ENCODE measurements at regions of chr2 and their contacts with region 1.

Region 1: DNA sequence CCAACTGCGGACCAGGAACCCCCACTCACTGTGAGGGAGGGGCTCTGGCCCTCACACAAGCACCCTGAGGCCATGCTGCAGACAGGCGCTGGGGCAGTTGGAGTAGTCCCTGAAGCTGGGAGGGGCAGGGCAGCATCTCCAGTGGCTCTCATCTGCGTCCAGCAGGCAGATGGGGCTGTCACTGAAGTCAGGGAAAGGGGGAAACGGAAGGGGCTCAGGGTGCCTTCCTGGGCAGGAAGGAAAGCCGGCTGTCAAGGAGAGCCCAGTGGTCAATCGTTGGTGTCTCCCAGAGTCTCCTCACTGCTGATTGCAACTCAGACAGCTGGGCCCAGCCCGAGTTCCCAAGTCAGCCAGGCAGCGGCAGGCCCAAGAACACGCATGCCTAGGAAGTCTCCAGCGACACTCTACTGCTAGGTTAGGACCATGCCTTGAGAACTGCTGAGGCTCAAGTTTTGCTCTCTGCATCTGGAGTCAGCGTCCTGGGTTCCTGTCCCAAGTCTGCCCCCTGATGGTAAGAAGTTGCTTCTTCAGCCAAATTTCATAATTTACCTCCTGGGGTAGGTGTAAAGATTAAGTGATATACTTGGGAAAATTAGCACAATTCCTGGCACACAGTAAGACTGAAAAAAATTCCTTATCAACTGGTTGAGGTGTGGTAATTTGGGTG is 27.5 kb upstream of the NMUR1 start:
- DNase-seq: no peak
- H3K4me3 ChIP-seq: no peak overlapping the region
- H3K27me3 ChIP-seq: 0 out of 2 replicates have a peak, but pooled peaks cover 1% of the 10 kb centered on the region
- CTCF ChIP-seq: peak; percentile 82

Region 2: GRCh38 chr2:231482806-231483391 is 74.8 kb before region 1 on chr2:
- CTCF ChIA-PET with region 1: interaction called, 52 read pairs
- POLR2A ChIA-PET with region 1: no interaction called
- DNase-seq: no peak
- H3K4me3 ChIP-seq: peak overlapping the region; percentile 10
- H3K27me3 ChIP-seq: no peaks in the 10 kb centered on the region
- CTCF ChIP-seq: peak; percentile 95

Region 3: DNA sequence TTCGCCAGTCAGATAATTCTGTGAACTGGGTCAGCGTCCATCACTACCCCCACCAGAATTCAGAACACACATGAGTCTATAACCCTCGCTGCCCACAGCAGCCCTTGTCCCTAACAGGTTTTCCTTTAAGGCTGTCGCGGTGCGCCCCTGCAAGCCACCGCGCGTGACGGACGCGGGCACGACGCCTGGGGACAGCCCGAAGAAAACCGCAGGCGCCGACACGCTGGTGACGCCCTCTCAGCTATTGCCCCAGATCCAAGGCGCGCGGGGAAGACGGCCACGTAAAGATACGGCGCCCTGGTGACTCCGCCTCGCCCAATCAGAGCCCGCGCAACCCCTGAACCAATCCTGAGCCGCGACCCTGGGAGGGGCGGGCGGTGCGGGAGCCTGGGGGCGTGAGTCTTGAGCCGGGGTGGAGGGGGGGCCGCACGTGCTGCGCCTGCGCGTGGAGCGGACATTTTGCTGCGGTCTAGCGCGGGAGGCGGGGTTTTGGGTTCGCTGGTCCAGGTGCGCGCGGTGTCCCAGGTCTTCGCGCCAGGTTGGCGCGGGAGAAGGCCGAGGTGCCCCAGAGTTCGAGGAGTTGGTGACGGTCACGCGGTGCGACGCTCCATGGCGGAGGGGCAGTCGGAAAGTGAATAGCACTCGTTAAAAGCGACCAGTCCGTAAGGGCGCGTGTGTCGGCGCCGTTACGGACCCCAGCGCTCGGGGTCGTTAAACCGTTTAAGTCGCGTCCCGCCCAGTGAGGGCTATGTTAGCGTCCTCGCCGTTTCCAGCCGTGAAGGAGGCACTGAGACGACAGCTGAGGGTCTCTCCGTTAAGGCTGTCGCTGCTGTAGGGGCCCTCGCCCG is 43.4 kb before region 1 on chr2:
- CTCF ChIA-PET with region 1: interaction called, 23 read pairs
- POLR2A ChIA-PET with region 1: no interaction called
- DNase-seq: peak; percentile 74
- H3K4me3 ChIP-seq: peak overlapping the region; percentile 53
- H3K27me3 ChIP-seq: peaks cover 2% of the 10 kb centered on the region; the same call in 1 of the 2 replicates
- CTCF ChIP-seq: no peak

Region 4: DNA sequence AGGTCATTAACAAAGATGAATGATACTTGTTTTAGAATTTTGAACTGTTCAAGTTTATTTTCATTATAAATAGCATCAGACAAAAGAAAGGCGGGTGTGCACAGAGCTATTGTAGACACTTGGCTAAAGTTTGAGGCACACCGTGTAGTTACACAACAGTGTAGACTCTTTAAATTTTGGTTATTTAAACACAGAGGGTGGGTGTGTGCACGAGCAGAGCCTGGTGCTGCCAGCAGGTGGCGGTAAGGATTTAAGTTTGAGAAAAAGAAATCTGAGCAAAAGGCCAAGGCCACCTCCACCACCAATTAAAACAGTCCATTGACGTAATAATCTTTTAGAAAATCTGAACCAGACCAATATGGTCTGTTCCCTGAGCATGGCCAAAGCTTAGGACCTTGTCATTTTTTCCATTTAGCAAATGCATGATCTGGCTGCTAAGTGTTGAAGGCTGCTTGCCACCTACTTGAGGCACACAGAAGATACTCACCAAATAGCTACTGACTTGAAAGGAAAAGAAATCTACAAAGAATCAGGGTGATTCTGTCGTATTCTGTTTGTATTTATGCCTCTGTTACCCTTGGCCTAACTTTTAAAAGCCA is 242.9 kb after region 1 on chr2:
- CTCF ChIA-PET with region 1: no interaction called
- POLR2A ChIA-PET with region 1: no interaction called
- DNase-seq: no peak
- H3K4me3 ChIP-seq: no peak overlapping the region
- H3K27me3 ChIP-seq: no peaks in the 10 kb centered on the region
- CTCF ChIP-seq: peak; percentile 79

Region 5: DNA sequence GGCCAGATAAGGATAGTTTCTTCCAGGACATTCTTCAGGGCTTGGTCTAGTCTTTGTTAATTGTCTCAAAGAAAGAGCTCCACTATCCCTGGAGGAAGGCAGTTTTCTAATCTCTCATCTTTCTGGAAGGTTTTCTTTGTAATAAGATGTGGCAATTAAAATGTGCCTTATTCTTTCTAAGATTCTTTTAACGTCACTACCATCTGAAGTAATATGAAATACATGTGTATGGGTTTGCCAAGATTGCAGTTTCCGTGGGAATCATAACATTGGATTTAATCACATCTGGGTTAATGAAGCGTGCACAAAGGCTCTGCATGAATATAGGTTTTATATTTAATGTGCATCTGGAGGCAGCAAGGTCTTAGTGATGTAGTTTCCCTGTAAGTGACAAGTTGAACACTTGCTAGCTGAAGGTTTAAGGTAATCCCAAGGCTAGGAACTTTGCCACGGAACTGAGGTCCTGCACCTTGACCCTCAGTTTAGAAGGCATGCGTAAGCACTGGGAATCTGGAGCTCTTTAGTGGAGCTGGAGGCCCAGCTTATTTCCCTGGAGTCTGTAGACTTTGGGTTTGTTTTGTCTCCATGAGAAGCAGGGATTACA is 429.5 kb after region 1 on chr2:
- CTCF ChIA-PET with region 1: no interaction called
- POLR2A ChIA-PET with region 1: no interaction called
- DNase-seq: no peak
- H3K4me3 ChIP-seq: no peak overlapping the region
- H3K27me3 ChIP-seq: no peaks in the 10 kb centered on the region
- CTCF ChIP-seq: no peak